ENCODE measurements at regions of chr13 and their contacts with region 1.

Region 1: GRCh38 chr13:24307211-24308067 is 1.9 kb upstream of the C1QTNF9 start:
- DNase-seq: no peak
- ATAC-seq: peak; percentile 33
- H3K4me3 ChIP-seq: no peak overlapping the region
- H3K4me3 Mint-ChIP-seq: peak overlapping the region in 1 of 10 donors; percentile 11
- H3K27ac ChIP-seq: no peak overlapping the region
- H3K27ac Mint-ChIP-seq: peak overlapping the region in 1 of 9 donors; percentile 14
- H3K4me1 ChIP-seq: no peaks in the 10 kb centered on the region
- H3K4me1 Mint-ChIP-seq: peaks cover 0 to 5% (median 0%) of the 10 kb centered on the region in 7 donors
- H3K27me3 ChIP-seq: no peaks in the 10 kb centered on the region
- H3K27me3 Mint-ChIP-seq: no peaks in the 10 kb centered on the region

Region 2: DNA sequence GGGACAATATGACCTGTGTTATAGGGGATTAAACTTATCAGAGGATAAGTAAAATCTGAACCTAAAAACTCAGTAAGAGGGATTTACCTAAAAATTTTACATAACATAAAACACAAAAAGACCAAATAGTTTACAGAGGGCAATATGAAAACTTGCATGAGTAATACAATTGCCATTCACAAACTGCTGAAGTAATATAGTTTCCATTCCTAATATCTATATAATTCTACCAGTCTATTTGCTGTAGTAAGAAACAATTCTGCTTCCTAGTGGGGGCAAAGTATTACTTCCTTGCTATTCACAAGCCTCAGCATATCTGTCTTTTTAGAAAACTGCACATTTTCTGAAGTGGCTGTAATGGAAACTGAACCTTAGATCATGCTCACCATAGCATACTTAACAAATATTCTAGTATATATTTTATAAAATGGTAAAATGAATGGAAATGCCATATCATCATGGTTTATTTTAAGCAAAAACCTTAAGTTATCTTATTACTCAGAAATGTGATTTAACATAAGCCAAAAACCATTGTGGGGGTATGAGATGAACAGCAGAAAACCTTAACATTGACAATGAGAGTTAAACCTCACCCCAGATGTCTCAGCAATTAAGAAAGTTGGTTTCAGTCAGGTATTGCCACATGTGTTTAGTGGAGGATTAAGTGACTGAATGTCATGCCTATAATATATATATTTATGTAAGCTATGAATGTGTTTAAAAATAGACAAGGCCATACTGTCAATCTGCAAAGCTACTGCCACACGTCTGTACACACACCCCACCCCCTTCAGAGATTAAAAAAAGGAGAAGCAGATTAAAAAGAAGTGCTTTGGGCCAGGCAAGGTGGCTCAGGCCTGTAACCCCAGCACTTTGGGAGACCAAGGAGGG is 555.1 kb before region 1 on chr13:
- CTCF ChIA-PET with region 1: no interaction called
- POLR2A ChIA-PET with region 1: no interaction called
- intact Hi-C with region 1: no loop called
- DNase-seq: no peak
- ATAC-seq: no peak
- H3K4me3 ChIP-seq: no peak overlapping the region
- H3K4me3 Mint-ChIP-seq: no peak overlapping the region
- H3K27ac ChIP-seq: no peak overlapping the region
- H3K27ac Mint-ChIP-seq: peak overlapping the region in 1 of 9 donors; percentile 87
- H3K4me1 ChIP-seq: peaks cover 0 to 5% of the 10 kb centered on the region in 2 donors
- H3K4me1 Mint-ChIP-seq: peaks cover 10 to 30% (median 16%) of the 10 kb centered on the region in 7 donors
- H3K27me3 ChIP-seq: no peaks in the 10 kb centered on the region
- H3K27me3 Mint-ChIP-seq: peaks cover 0 to 5% (median 0%) of the 10 kb centered on the region in 5 donors

Region 3: DNA sequence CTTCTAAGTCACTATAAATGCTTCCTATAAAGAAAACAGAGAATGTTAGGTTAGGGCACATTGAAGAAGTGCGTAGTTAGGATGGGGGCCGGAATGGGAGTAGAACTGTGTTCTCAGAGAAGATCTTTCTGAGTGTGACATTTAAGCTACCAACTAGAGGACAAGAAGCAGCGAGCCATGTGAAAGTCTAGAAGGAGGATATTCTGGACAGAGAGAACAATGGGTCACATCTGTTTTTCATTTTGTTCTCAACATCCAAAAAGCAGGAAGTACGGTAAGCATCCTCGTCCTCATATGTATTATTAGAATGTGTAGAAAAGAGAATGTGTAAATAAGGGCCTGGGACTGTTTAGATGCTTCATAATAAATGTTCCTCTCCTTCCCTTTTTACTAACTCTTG is 249.6 kb after region 1 on chr13:
- CTCF ChIA-PET with region 1: no interaction called
- POLR2A ChIA-PET with region 1: no interaction called
- intact Hi-C with region 1: loop called in 1 of 2 experiments (anchors 10 kb)
- DNase-seq: no peak
- ATAC-seq: no peak
- H3K4me3 ChIP-seq: no peak overlapping the region
- H3K4me3 Mint-ChIP-seq: no peak overlapping the region
- H3K27ac ChIP-seq: no peak overlapping the region
- H3K27ac Mint-ChIP-seq: no peak overlapping the region
- H3K4me1 ChIP-seq: no peaks in the 10 kb centered on the region
- H3K4me1 Mint-ChIP-seq: peaks cover 0 to 12% (median 9%) of the 10 kb centered on the region in 7 donors
- H3K27me3 ChIP-seq: no peaks in the 10 kb centered on the region
- H3K27me3 Mint-ChIP-seq: peaks cover 44 to 61% (median 57%) of the 10 kb centered on the region in 5 donors

Region 4: DNA sequence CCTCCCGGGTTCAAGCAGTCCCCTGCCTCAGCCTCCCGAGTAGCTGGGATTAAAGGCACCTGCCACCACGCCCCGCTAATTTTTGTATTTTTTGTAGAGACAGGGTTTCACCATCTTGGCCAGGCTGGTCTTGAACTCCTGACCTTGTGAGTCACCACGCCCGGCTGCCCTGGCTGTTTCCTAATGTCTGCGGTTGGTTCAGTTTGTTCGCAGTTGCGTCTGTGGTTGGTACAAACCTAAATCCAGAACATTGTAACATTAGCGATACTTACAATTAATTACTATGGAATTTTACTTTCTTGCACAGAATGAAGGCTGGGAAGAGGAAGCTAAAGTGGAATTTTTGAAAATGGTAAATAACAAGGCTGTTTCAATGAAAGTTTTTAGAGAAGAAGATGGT is 494.6 kb after region 1 on chr13:
- CTCF ChIA-PET with region 1: no interaction called
- POLR2A ChIA-PET with region 1: no interaction called
- intact Hi-C with region 1: no loop called
- DNase-seq: no peak
- ATAC-seq: no peak
- H3K4me3 ChIP-seq: no peak overlapping the region
- H3K4me3 Mint-ChIP-seq: no peak overlapping the region
- H3K27ac ChIP-seq: no peak overlapping the region
- H3K27ac Mint-ChIP-seq: no peak overlapping the region
- H3K4me1 ChIP-seq: no peaks in the 10 kb centered on the region
- H3K4me1 Mint-ChIP-seq: no peaks in the 10 kb centered on the region
- H3K27me3 ChIP-seq: no peaks in the 10 kb centered on the region
- H3K27me3 Mint-ChIP-seq: peaks cover 24 to 39% (median 27%) of the 10 kb centered on the region in 5 donors